CD4-positive, alpha-beta T cell (primary cell): ENCODE measurements at regions of chr17 and their contacts with region 1.

Region 1: DNA sequence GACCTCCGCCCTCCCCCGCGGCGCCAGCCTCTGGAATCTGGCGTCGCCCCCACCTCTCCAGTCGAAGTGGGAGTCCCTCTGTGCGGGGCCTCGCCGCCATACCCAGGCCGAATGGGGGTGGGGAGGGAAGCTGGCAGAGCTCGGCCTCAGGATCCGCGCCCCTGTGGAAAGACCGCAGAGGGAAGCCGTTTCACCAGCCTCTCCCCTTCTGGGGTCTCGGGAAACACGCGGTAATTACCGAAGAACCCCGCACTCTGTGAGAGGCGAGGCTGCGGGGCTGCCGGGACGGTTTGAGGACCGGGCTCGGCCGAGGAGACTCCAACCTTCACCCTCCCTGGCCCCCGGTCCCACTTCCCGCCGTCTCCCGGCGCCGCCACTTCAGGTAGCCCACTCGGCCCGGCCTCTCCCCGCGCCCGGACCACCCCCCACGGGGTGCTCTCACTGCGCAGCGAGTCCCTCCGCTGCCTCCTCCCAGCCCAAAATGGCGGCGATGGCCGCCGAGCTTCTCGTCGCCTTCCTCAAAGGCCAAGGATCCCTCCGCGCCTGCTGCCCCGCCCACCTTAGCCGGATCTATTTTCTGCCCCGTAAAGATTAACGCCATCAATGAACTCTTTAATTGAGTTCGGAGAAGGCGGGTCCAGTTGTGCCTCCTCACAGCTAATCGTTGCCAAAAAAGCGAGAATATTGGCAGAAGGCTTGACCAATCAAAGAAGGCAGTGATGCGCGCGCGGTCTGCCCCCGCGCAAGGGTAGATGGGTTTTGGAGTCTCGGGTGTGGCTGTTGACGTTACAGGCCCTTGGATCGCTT is 453 bp upstream of the HEXIM2 start:
- DNase-seq: peak; percentile 94 to 100 (median 98)
- ATAC-seq: peak; percentile 93
- H3K4me3 ChIP-seq: peak overlapping the region; percentile 97
- H3K4me3 Mint-ChIP-seq: peak overlapping the region; percentile 93
- H3K27ac ChIP-seq: peak overlapping the region; percentile 98 to 99
- H3K27ac Mint-ChIP-seq: peak overlapping the region; percentile 94
- H3K4me1 ChIP-seq: peaks cover 26% of the 10 kb centered on the region
- H3K4me1 Mint-ChIP-seq: peaks cover 37% of the 10 kb centered on the region
- H3K27me3 ChIP-seq: no peaks in the 10 kb centered on the region
- H3K27me3 Mint-ChIP-seq: no peaks in the 10 kb centered on the region
- CTCF ChIP-seq: no peak

Region 2: DNA sequence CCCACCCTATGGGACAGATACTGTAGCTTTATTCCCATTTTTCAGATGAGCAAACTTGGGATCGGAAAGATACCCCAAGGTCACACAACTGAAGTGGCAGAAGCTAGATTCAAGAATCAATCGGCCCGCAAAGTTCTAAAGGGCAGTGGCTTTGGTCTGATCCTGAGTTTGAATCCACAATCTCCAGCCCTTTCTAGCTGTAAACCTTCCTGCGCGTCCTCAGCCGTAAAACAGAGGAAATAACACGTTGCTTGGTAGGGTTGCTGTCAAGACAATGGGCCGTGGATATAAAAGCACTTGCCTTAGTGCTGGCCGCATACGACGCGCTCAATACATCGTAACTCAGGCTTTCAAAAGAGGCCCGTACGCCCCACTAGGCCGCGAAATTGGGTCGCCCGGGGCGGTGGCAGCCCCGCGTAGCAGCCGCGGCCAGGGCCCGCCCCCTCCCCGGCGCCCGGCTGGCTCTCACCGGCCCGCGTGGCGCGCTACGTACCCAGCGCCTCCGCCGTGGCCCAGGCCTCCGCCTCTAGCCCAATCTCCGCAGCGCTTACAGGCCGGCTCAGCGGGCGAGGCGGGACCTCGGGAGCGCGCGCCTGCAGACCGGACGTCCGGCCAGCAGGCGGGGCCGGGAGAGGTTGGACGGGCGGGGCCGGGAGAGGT is 110.0 kb before region 1 on chr17 and contains the start of gene DCAKD:
- CTCF ChIA-PET with region 1: no interaction called
- POLR2A ChIA-PET with region 1: interaction called, 11 read pairs
- intact Hi-C with region 1: no loop called
- DNase-seq: peak; percentile 75 to 98 (median 86)
- ATAC-seq: peak; percentile 85
- H3K4me3 ChIP-seq: peak within 1 kb of the TSS; percentile 82
- H3K4me3 Mint-ChIP-seq: peak within 1 kb of the TSS; percentile 88
- H3K27ac ChIP-seq: peak within 1 kb of the TSS; percentile 83 to 96
- H3K27ac Mint-ChIP-seq: peak within 1 kb of the TSS; percentile 96
- H3K4me1 ChIP-seq: peaks cover 43% of the 10 kb centered on the region
- H3K4me1 Mint-ChIP-seq: peaks cover 33% of the 10 kb centered on the region
- H3K27me3 ChIP-seq: no peaks in the 10 kb centered on the region
- H3K27me3 Mint-ChIP-seq: no peaks in the 10 kb centered on the region
- CTCF ChIP-seq: no peak
- total RNA-seq, gene DCAKD: 11.6 to 12.2 TPM

Region 3: DNA sequence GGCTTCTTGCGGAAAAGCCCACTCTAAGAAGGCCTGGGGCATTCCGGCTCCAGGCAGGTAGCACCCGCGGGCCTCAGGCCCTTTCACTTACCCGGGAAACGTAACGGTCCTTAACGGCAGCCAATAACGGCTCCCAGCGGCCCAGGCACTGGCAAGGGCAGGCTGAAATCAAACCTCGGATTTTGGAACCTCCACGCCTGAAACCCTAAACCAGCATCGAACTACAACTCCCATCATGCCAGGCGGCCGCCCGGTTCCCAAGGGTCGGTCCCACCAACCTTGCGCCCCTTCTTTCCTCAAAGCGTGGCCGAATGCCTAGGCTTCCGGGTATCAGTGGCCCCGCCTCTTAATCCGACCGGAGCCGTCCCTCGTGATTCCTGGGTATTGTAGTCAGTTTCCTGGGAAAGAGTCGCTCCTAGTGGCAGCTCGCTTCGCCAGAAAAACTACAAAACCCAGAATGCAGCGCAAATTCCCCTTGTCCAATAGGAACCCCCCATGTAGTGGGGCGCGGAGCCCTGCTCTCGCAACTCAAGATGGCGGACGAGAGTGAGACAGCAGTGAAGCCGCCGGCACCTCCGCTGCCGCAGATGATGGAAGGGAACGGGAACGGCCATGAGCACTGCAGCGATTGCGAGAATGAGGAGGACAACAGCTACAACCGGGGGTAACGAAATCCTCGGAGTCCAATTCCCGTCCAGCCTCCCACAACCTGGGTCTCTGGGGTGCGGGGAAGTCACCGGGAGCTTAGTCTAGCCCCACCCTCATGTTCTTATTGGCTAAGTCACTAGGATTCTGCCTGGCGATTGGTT is 100.2 kb before region 1 on chr17 and contains the start of gene NMT1:
- CTCF ChIA-PET with region 1: interaction called, 4 read pairs
- POLR2A ChIA-PET with region 1: interaction called, 11 read pairs
- intact Hi-C with region 1: loop called in 1 of 2 experiments (anchors 5 kb)
- DNase-seq: peak; percentile 87 to 99 (median 92)
- ATAC-seq: peak; percentile 89
- H3K4me3 ChIP-seq: peak within 1 kb of the TSS; percentile 72
- H3K4me3 Mint-ChIP-seq: peak within 1 kb of the TSS; percentile 100
- H3K27ac ChIP-seq: peak within 1 kb of the TSS; percentile 80 to 87
- H3K27ac Mint-ChIP-seq: peak within 1 kb of the TSS; percentile 92
- H3K4me1 ChIP-seq: peaks cover 50% of the 10 kb centered on the region
- H3K4me1 Mint-ChIP-seq: peaks cover 55% of the 10 kb centered on the region
- H3K27me3 ChIP-seq: no peaks in the 10 kb centered on the region
- H3K27me3 Mint-ChIP-seq: no peaks in the 10 kb centered on the region
- CTCF ChIP-seq: no peak
- total RNA-seq, gene NMT1: 61.1 to 62.2 TPM

Region 4: GRCh38 chr17:45098869-45099616 is 62.2 kb before region 1 on chr17:
- CTCF ChIA-PET with region 1: no interaction called
- POLR2A ChIA-PET with region 1: no interaction called
- intact Hi-C with region 1: no loop called
- DNase-seq: peak; percentile 61 to 86 (median 72)
- ATAC-seq: peak; percentile 90
- H3K4me3 ChIP-seq: no peak overlapping the region
- H3K4me3 Mint-ChIP-seq: no peak overlapping the region
- H3K27ac ChIP-seq: no peak overlapping the region
- H3K27ac Mint-ChIP-seq: no peak overlapping the region
- H3K4me1 ChIP-seq: no peaks in the 10 kb centered on the region
- H3K4me1 Mint-ChIP-seq: peaks cover 7% of the 10 kb centered on the region
- H3K27me3 ChIP-seq: no peaks in the 10 kb centered on the region
- H3K27me3 Mint-ChIP-seq: no peaks in the 10 kb centered on the region
- CTCF ChIP-seq: peak; percentile 91

Region 5: GRCh38 chr17:45172454-45173286 is 11.4 kb after region 1 on chr17:
- CTCF ChIA-PET with region 1: no interaction called
- POLR2A ChIA-PET with region 1: interaction called, 87 read pairs
- intact Hi-C with region 1: no loop called
- DNase-seq: peak; percentile 11 to 75 (median 52)
- ATAC-seq: peak; percentile 83
- H3K4me3 ChIP-seq: peak overlapping the region; percentile 45
- H3K4me3 Mint-ChIP-seq: peak overlapping the region; percentile 83
- H3K27ac ChIP-seq: peak overlapping the region in 1 of 2 donors; percentile 44
- H3K27ac Mint-ChIP-seq: peak overlapping the region; percentile 76
- H3K4me1 ChIP-seq: peaks cover 23% of the 10 kb centered on the region
- H3K4me1 Mint-ChIP-seq: peaks cover 26% of the 10 kb centered on the region
- H3K27me3 ChIP-seq: no peaks in the 10 kb centered on the region
- H3K27me3 Mint-ChIP-seq: no peaks in the 10 kb centered on the region
- CTCF ChIP-seq: peak; percentile 46

Region 6: GRCh38 chr17:45197555-45198334 is 36.5 kb after region 1 on chr17:
- CTCF ChIA-PET with region 1: interaction called, 16 read pairs
- POLR2A ChIA-PET with region 1: interaction called, 15 read pairs
- intact Hi-C with region 1: loop called in 1 of 2 experiments (anchors 5 kb)
- DNase-seq: peak; percentile 72 to 91 (median 84)
- ATAC-seq: peak; percentile 100
- H3K4me3 ChIP-seq: no peak overlapping the region
- H3K4me3 Mint-ChIP-seq: no peak overlapping the region
- H3K27ac ChIP-seq: no peak overlapping the region
- H3K27ac Mint-ChIP-seq: no peak overlapping the region
- H3K4me1 ChIP-seq: peaks cover 8% of the 10 kb centered on the region
- H3K4me1 Mint-ChIP-seq: peaks cover 3% of the 10 kb centered on the region
- H3K27me3 ChIP-seq: no peaks in the 10 kb centered on the region
- H3K27me3 Mint-ChIP-seq: no peaks in the 10 kb centered on the region
- CTCF ChIP-seq: peak; percentile 92

Region 7: GRCh38 chr17:45317112-45317928 is 156.1 kb after region 1 on chr17:
- CTCF ChIA-PET with region 1: no interaction called
- POLR2A ChIA-PET with region 1: interaction called, 19 read pairs
- intact Hi-C with region 1: loop called in 1 of 2 experiments (anchors 5 kb)
- DNase-seq: peak; percentile 93 to 100 (median 100)
- ATAC-seq: peak; percentile 83
- H3K4me3 ChIP-seq: peak overlapping the region; percentile 88
- H3K4me3 Mint-ChIP-seq: peak overlapping the region; percentile 98
- H3K27ac ChIP-seq: peak overlapping the region; percentile 51 to 79
- H3K27ac Mint-ChIP-seq: peak overlapping the region; percentile 85
- H3K4me1 ChIP-seq: peaks cover 81% of the 10 kb centered on the region
- H3K4me1 Mint-ChIP-seq: peaks cover 88% of the 10 kb centered on the region
- H3K27me3 ChIP-seq: no peaks in the 10 kb centered on the region
- H3K27me3 Mint-ChIP-seq: no peaks in the 10 kb centered on the region
- CTCF ChIP-seq: no peak